MCF 10A (cell line): ENCODE measurements at regions of chr11 and their contacts with region 1.

Region 1: GRCh38 chr11:35927730-35928129 is 16.1 kb upstream of the LDLRAD3 start:
- DNase-seq: peak; percentile 99
- H3K4me3 Mint-ChIP-seq: peak overlapping the region; percentile 29
- H3K27ac Mint-ChIP-seq: peak overlapping the region; percentile 91
- H3K4me1 Mint-ChIP-seq: peaks cover 18% of the 10 kb centered on the region
- H3K27me3 Mint-ChIP-seq: no peaks in the 10 kb centered on the region
- CTCF ChIP-seq: no peak

Region 2: DNA sequence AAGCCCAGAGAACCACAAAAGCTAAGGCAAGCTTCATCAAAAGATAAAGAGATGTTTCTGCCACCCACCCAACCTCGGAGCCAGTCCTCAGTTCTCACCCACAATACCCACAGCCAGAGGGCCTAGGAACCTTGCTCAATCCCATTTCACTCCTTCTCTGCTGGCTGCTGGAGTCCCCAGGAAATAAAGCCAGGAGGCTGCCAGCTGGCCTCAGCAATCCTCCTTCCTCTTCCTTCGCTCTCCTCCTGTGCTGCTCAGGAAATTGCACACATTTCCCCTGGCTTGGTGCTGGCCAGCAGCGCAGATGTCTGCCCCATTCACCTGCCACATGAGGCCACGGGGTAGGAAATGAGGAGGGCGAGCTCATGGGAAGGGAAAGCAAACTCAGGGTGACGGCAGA is 75.7 kb before region 1 on chr11:
- CTCF ChIA-PET with region 1: no interaction called
- POLR2A ChIA-PET with region 1: no interaction called
- intact Hi-C with region 1: no loop called
- DNase-seq: no peak
- H3K4me3 Mint-ChIP-seq: no peak overlapping the region
- H3K27ac Mint-ChIP-seq: no peak overlapping the region
- H3K4me1 Mint-ChIP-seq: no peaks in the 10 kb centered on the region
- H3K27me3 Mint-ChIP-seq: no peaks in the 10 kb centered on the region
- CTCF ChIP-seq: no peak

Region 3: GRCh38 chr11:35893796-35894475 is 33.8 kb before region 1 on chr11:
- CTCF ChIA-PET with region 1: interaction called, 5 read pairs
- POLR2A ChIA-PET with region 1: interaction called, 14 read pairs
- intact Hi-C with region 1: no loop called
- DNase-seq: peak; percentile 97
- H3K4me3 Mint-ChIP-seq: peak overlapping the region; percentile 31
- H3K27ac Mint-ChIP-seq: peak overlapping the region; percentile 33
- H3K4me1 Mint-ChIP-seq: peaks cover 33% of the 10 kb centered on the region
- H3K27me3 Mint-ChIP-seq: no peaks in the 10 kb centered on the region
- CTCF ChIP-seq: no peak

Region 4: DNA sequence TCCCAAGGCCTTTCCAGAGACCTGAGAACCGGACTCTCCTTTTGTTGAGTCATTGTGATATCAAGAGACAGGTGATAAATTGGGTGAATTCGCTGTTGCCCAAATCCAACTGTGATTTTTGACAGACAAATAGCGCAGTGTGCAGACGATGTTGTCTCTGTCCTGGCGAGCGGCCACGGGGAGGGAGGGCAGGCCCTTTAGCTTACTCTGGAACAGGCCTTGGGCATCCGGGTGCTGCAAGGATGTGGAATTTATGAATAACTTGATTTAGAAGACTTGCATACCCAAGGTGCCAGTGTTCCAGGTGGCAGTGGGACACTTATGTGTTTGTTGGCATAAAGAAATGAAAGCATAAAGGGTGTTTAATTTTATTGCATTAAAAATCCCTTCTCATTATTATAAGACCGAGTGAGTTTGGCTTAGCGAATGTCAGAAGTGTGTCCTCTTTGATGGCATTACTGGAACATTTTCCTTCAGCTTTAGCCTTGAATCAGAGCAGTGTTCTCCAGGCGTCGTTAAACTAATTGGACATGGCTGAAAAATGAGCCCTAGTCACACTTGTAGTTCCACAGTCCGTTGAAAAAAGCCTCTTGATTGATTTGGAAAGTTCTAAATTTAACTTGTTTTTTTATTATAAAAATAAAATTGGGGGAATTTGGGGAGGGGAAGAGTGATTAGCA is 25.5 kb after region 1 on chr11:
- CTCF ChIA-PET with region 1: no interaction called
- POLR2A ChIA-PET with region 1: interaction called, 25 read pairs
- intact Hi-C with region 1: no loop called
- DNase-seq: peak; percentile 69
- H3K4me3 Mint-ChIP-seq: no peak overlapping the region
- H3K27ac Mint-ChIP-seq: peak overlapping the region; percentile 81
- H3K4me1 Mint-ChIP-seq: peaks cover 66% of the 10 kb centered on the region
- H3K27me3 Mint-ChIP-seq: no peaks in the 10 kb centered on the region
- CTCF ChIP-seq: no peak

Region 5: DNA sequence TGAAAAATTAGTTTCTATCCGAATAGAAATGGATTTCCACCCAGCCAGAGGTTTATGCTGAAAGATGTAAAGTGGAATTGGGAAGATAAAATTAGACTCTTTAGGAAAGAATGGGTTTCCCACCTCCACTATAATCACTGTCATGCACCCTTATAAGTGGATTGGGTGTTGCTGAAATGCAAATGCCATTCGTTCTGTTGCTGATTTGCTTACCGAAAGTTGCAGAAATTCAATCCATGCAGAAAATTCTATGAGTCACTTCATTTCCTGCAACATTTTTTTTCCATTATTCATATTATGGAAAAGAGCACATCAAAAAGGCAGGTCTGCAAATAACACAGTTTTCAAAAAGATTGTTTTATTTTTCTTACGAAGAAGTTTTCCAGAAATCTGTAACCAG is 81.7 kb after region 1 on chr11:
- CTCF ChIA-PET with region 1: no interaction called
- POLR2A ChIA-PET with region 1: no interaction called
- intact Hi-C with region 1: no loop called
- DNase-seq: peak; percentile 70
- H3K4me3 Mint-ChIP-seq: peak overlapping the region; percentile 66
- H3K27ac Mint-ChIP-seq: peak overlapping the region; percentile 78
- H3K4me1 Mint-ChIP-seq: peaks cover 60% of the 10 kb centered on the region
- H3K27me3 Mint-ChIP-seq: no peaks in the 10 kb centered on the region
- CTCF ChIP-seq: no peak

Region 6: GRCh38 chr11:36162883-36163434 is 235.2 kb after region 1 on chr11:
- CTCF ChIA-PET with region 1: no interaction called
- POLR2A ChIA-PET with region 1: no interaction called
- intact Hi-C with region 1: no loop called
- DNase-seq: no peak
- H3K4me3 Mint-ChIP-seq: no peak overlapping the region
- H3K27ac Mint-ChIP-seq: no peak overlapping the region
- H3K4me1 Mint-ChIP-seq: peaks cover 15% of the 10 kb centered on the region
- H3K27me3 Mint-ChIP-seq: no peaks in the 10 kb centered on the region
- CTCF ChIP-seq: no peak